Mammary epithelial cell (primary cell): ENCODE measurements at regions of chr5 and their contacts with region 1.

Region 1: GRCh38 chr5:53425598-53426511 is 54.6 kb upstream of the FST start:
- DNase-seq: no peak
- H3K4me3 ChIP-seq: no peak overlapping the region
- H3K27ac ChIP-seq: peak overlapping the region; percentile 100
- H3K4me1 ChIP-seq: peaks cover 44% of the 10 kb centered on the region
- H3K27me3 ChIP-seq: no peaks in the 10 kb centered on the region
- CTCF ChIP-seq: peak; percentile 12 to 24

Region 2: GRCh38 chr5:53170748-53171349 is 255.0 kb before region 1 on chr5:
- CTCF ChIA-PET with region 1: interaction called, 3 read pairs
- dilution Hi-C with region 1: no loop called
- in situ Hi-C with region 1: loop called (anchors 10 to 25 kb)
- intact Hi-C with region 1: loop called (anchors 1 kb)
- DNase-seq: peak; percentile 52
- H3K4me3 ChIP-seq: no peak overlapping the region
- H3K27ac ChIP-seq: peak overlapping the region; percentile 51
- H3K4me1 ChIP-seq: no peaks in the 10 kb centered on the region
- H3K27me3 ChIP-seq: no peaks in the 10 kb centered on the region
- CTCF ChIP-seq: peak; percentile 77 to 78

Region 3: GRCh38 chr5:53303105-53303504 is 122.8 kb before region 1 on chr5:
- CTCF ChIA-PET with region 1: interaction called, 11 read pairs
- dilution Hi-C with region 1: no loop called
- in situ Hi-C with region 1: no loop called
- intact Hi-C with region 1: no loop called
- DNase-seq: peak; percentile 94
- H3K4me3 ChIP-seq: no peak overlapping the region
- H3K27ac ChIP-seq: peak overlapping the region; percentile 93
- H3K4me1 ChIP-seq: peaks cover 18% of the 10 kb centered on the region
- H3K27me3 ChIP-seq: no peaks in the 10 kb centered on the region
- CTCF ChIP-seq: no peak

Region 4: GRCh38 chr5:53323943-53324642 is 101.8 kb before region 1 on chr5:
- CTCF ChIA-PET with region 1: no interaction called
- dilution Hi-C with region 1: no loop called
- in situ Hi-C with region 1: loop called in 1 of 2 experiments (anchors 5 kb)
- intact Hi-C with region 1: loop called (anchors 1 kb)
- DNase-seq: peak; percentile 99
- H3K4me3 ChIP-seq: no peak overlapping the region
- H3K27ac ChIP-seq: peak overlapping the region; percentile 99
- H3K4me1 ChIP-seq: peaks cover 78% of the 10 kb centered on the region
- H3K27me3 ChIP-seq: no peaks in the 10 kb centered on the region
- CTCF ChIP-seq: no peak

Region 5: GRCh38 chr5:54093081-54093492 is 667.2 kb after region 1 on chr5:
- CTCF ChIA-PET with region 1: interaction called, 14 read pairs
- dilution Hi-C with region 1: no loop called
- in situ Hi-C with region 1: no loop called
- intact Hi-C with region 1: no loop called
- DNase-seq: peak; percentile 81
- H3K4me3 ChIP-seq: no peak overlapping the region
- H3K27ac ChIP-seq: peak overlapping the region; percentile 3
- H3K4me1 ChIP-seq: peaks cover 37% of the 10 kb centered on the region
- H3K27me3 ChIP-seq: no peaks in the 10 kb centered on the region
- CTCF ChIP-seq: no peak